HEK293 (cell line): ENCODE measurements at regions of chr9 and their contacts with region 1.

Region 1: DNA sequence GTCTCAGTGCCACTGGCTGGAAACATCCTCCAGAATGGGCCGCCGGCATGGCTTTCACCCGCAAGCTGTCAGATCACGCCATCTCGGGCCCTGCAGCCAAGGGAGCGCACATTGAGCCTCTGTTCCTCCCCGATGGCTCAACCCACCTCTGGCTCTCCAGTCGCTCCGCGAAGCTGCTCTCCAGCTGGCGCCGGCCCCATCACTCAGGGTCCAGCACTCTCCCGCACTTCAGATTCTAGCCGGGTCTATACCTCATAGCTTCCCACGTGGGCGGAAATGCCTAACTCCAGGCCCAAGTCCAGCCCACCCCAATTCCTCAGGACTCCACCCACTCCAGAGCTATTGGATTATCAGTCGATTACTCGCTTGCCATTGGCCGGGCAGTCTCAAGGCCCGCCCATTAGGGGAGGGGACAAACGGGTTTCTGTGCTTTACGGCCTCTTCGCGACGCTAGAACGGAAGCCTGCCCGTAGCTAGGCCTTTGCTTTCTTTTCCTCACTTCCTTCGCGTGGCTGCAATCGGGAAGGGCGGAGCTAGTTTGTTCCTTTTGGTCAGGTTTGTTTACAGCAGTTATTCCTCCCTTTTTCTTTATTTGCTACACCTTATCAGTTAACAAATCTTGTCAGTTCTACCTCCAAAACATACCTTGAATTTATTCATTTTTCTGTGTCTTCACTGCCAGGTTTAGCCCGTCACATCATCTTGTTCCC is at the start of gene NOL6:
- H3K4me3 ChIP-seq: peak within 1 kb of the TSS; percentile 91
- H3K27ac ChIP-seq: no peak within 1 kb of the TSS
- H3K4me1 ChIP-seq: no peaks in the 10 kb centered on the region
- CTCF ChIP-seq: no peak

Region 2: GRCh38 chr9:33404788-33405362 is 68.9 kb before region 1 on chr9:
- CTCF ChIA-PET with region 1: interaction called, 61 read pairs
- POLR2A ChIA-PET with region 1: interaction called, 9 read pairs
- H3K4me3 ChIP-seq: no peak overlapping the region
- H3K27ac ChIP-seq: no peak overlapping the region
- H3K4me1 ChIP-seq: no peaks in the 10 kb centered on the region
- CTCF ChIP-seq: no peak

Region 3: DNA sequence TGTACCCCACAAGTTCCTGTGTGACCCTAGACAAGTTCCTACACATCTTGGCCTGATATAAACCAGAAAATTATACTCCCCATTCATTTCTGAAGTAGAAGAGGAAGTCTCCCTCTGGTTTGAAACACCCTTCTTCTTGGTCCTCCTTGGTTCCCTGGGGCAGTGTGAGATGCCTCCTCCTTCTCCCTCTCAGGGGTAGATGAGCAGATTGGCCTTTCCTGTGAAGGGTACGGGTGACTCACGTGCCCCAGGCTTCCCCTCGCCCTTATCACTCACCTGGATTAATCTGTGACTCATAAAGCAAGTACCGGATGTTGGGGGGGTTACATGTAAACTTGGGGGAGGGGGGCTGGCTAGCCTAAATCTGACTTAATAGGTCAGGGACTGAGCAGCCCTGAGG is 15.4 kb before region 1 on chr9:
- CTCF ChIA-PET with region 1: interaction called, 176 read pairs
- POLR2A ChIA-PET with region 1: interaction called, 29 read pairs
- H3K4me3 ChIP-seq: no peak overlapping the region
- H3K27ac ChIP-seq: no peak overlapping the region
- H3K4me1 ChIP-seq: no peaks in the 10 kb centered on the region
- CTCF ChIP-seq: no peak

Region 4: DNA sequence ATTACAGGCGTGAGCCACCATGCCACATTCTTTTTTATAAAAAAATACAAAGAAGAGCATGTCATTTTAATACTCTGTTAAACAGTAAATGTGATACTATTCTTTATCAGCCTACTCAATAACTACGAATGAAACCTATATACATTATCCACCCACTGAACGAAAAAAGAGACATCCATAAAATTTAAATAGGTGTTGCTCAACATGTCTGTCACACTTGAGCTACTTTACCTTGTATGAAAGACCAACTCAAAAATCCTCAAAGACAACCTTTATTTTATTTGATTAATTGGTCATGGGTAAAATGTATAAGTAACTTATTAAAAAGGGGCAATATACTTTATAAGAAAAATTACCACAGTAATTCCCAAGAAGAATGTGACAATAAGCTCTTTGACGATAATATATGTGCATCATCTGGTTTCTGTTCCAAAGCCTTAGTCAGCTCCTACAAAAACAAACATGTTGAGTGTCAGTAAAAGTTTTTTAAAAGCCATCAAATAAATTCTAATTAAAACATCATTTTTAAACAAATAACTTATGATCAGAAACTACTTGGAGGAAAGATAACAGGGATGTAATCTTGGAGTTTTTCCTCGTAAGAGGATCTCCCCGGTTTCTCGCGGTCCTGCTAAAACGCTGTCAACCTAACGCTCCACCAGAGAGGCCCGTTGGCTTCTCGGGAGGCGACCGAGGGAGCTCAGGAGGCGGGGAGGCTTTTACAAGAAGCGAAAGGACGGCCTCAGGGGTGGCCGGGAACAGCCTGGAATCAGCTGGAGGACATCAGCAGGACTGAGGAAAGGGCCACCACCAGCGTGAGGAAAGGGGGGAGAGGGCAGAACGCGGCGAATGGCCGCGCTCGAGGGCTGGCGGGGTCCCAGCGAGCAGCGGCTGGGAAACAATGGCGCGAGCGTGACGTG is 36.7 kb after region 1 on chr9:
- CTCF ChIA-PET with region 1: interaction called, 11 read pairs
- POLR2A ChIA-PET with region 1: interaction called, 9 read pairs
- H3K4me3 ChIP-seq: peak overlapping the region; percentile 76
- H3K27ac ChIP-seq: peak overlapping the region; percentile 91
- H3K4me1 ChIP-seq: no peaks in the 10 kb centered on the region
- CTCF ChIP-seq: no peak

Region 5: GRCh38 chr9:33524306-33524947 is 50.6 kb after region 1 on chr9:
- CTCF ChIA-PET with region 1: interaction called, 6 read pairs
- POLR2A ChIA-PET with region 1: interaction called, 34 read pairs
- H3K4me3 ChIP-seq: peak overlapping the region; percentile 72
- H3K27ac ChIP-seq: peak overlapping the region; percentile 85
- H3K4me1 ChIP-seq: 0 out of 2 replicates have a peak, but pooled peaks cover 2% of the 10 kb centered on the region
- CTCF ChIP-seq: no peak

Region 6: DNA sequence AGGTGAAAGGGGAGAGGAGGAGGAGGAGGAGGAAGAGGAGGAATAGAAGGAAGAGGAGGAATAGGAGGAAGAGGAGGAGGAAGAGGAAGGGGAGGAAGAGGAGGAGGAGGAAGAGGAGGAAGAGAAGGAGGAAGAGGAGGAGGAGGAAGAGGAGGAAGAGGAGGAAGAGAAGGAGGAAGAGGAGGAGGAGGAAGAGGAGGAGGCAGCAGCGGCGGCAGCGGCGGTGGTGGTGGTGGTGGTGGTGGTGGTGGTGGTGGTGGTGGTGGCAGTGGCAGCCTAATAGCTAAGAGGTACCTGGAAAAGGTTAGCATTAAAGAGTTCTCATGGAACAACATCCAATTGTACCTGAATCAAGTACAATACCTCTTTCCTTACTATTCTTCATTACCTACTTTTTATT is 542.4 kb after region 1 on chr9:
- CTCF ChIA-PET with region 1: no interaction called
- POLR2A ChIA-PET with region 1: no interaction called
- H3K4me3 ChIP-seq: no peak overlapping the region
- H3K27ac ChIP-seq: no peak overlapping the region
- H3K4me1 ChIP-seq: no peaks in the 10 kb centered on the region
- CTCF ChIP-seq: no peak